ACHN (cell line): ENCODE measurements at regions of chr16 and their contacts with region 1.

Region 1: DNA sequence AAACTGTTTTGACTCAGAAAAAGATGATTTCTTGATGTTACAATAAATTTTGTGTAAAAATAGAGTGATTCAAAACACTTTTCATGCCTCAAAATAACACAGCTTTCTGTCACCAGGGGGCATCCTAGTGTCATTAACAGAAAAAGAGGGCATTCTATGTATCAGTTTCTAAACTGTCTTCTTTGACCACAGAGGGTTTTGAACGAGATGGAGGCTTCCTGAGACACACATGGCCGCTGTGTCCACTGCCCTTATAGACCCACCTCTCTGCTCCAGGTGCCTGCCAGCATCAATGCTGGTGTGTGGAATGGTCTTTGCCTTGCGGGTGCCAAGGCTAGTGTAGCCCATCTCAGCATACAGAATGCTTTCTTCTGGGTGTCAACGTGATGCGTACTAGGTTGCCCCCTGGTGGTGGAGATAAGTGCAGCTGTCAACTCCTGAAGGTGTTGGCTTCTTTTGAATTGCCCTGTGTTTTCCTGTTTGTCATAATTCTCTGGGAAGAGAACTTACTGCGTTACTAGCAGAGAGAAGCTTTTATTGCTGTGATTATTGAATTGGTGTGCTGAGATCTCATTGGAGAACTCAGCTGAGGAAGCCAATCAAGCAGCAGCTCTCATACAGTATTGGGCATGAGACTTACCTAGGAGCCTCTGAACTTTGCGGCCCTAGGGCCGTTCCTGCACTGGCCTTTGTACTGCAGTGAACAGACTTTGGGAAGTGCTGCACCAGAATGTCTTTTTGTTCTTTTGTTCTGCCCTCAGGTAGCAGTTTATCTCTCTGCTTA is 38.6 kb downstream of the USP10 start:
- DNase-seq: peak; percentile 88

Region 2: DNA sequence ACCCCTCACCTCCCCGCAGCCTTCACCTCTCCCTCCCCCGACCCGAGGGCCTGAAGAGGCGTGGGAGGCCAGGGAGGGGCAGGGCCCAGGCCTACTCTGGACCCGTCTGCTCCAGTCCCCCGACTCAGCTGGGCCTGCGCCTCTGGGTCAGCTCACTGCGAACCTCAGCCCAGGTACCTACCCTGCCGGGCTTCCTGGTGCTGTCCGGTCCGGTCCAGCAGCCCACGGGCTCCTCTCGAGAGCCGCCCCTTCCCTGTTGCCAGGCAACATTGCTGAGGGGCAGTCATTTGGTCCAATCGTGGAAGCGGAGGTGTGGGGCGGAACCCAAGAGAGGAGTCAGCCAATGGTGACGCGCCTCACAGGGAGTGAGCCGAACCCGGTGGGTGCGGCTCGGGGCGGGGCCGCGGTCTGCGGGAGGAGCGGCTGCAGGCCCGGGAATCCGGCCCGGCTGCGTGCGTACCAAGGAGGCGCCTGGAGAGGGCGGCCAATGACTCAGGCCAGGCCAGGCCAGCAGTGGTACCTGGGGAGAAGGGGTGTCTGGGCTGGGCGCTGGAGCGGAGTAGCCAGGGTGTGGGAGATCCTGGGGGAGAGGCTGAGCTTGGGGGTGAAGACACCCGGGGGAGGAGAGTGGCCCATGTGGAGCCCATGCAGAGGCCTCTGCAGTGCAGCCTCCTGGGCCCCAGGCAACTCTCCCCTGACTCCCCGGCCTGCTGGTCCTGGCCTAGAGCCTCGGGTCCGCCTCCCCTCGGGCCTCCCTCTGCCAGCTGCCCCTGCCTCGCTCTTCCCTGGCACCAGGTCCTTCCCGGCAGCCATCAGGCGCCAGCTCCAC is 233.8 kb before region 1 on chr16 and contains the start of gene MEAK7:
- in situ Hi-C with region 1: loop called (anchors 25 kb)
- DNase-seq: peak; percentile 100

Region 3: DNA sequence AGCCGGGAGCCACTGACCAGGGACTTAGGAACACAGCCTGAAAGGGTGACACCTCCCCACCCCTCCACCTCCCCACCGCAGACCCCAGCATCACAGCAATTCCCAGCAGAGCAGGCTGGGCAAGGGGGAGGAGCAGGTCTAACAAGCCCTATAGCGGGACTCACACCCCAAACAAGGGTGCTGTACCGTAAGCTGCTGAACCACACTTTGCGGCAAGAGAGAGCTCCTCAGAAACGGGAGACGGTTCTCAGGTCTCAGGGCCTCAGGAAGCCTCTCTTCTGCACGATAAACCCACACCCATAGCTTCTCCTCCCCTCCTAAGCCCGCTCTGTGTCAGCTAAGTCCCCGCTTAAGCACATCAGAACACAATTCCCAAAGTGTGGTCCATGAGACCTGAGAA is 108.9 kb before region 1 on chr16:
- in situ Hi-C with region 1: no loop called
- DNase-seq: no peak